ENCODE measurements at regions of chr19 and their contacts with region 1.

Region 1: DNA sequence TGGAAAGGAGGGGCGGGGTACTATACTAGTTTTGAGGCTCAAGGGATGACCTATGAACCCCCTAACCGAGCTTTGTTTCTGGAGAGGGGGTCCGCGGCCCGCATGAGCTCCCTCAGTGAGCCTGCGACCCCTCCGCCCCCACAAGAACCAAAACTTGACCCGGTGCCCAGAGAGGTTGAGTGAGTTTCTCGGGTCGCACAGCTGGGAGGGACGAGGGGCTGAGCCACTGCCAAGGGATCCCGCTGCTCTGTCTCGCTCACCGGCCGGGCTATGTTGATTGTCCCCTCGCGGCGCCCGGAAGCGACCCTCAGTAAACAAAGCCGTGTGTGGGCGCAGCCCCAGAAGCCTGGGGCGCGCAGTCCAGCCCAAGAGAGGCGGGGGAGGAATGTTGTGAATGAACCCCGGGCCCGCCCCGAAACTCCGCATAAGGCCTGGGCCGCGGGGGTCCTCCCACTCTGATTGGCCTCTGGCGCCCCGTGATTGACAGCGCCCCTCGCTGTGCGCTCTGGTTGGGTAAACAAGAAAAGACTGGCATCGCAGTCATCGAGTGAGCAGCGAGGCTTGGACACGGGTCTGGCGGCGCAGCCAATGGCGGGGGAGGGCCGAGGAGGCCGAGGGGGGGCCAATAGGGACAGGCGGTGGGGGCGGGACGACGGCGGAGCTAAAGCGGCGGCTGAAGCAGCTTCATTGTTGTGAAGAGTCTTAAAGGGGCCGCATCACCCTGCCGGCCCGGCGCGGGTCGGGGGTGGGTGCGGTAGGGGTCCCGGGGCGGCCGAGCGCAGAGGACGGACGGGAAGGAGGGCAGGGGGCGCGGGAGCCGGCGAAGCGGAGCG is at the start of gene ZSWIM4:
- DNase-seq: peak; percentile 64 to 94 (median 79)
- ATAC-seq: peak; percentile 92 to 97 (median 96)
- H3K4me3 ChIP-seq: peak within 1 kb of the TSS; percentile 69 to 70
- H3K4me3 Mint-ChIP-seq: peak within 1 kb of the TSS; percentile 94 to 97 (median 95)
- H3K27ac ChIP-seq: peak within 1 kb of the TSS; percentile 73
- H3K27ac Mint-ChIP-seq: peak within 1 kb of the TSS; percentile 94 to 96
- H3K4me1 ChIP-seq: peaks cover 6 to 32% of the 10 kb centered on the region in 2 experiments
- H3K4me1 Mint-ChIP-seq: peaks cover 30 to 35% (median 34%) of the 10 kb centered on the region in 3 donors
- H3K27me3 ChIP-seq: no peaks in the 10 kb centered on the region
- H3K27me3 Mint-ChIP-seq: no peaks in the 10 kb centered on the region
- total RNA-seq, gene ZSWIM4: 5.4 to 9.8 (median 9.0) TPM

Region 2: DNA sequence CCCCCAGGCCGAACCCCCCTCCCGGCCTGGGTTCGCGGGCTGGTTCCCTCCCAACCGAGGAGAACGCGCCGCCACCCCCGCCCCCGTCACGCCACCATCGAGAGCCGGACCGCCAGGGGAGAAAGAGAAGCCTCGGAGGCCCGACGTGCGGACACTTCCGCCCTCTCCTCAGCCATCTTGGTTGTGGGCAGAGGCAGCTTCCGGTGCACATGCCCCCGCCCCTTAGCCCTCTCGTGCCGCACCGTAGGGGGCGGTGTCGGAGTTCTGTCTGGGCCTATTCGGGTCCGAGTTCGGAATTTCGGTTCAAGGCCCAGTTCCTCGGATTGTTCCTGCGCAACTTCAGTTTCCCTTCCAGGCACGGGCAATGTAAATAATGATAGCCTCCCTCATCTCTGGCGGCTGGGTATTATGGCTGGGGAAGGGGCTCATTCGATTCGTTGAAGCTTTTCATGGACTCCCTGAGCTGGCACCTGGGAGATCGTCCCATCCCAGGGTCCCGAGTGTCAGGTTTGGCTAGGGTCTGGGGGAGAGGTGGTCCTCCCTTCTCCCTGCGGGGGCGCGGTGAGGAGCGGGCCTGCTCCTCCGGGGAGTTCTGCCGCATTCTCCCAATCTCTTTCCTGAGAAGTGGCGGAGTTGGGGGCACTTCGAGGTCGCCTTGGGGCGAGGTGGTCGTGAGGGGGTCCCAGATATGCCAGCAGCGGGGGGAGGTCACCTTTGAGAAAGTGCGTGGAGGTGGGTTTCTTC is 644.6 kb before region 1 on chr19 and contains the starts of genes IER2 and STX10:
- CTCF ChIA-PET with region 1: no interaction called
- POLR2A ChIA-PET with region 1: interaction called in 1 of 2 experiments, 12 read pairs
- DNase-seq: peak; percentile 81 to 95 (median 92)
- ATAC-seq: peak; percentile 58 to 62 (median 60)
- H3K4me3 ChIP-seq: peak within 1 kb of the TSS; percentile 70 to 99
- H3K4me3 Mint-ChIP-seq: peak within 1 kb of the TSS; percentile 98 to 99 (median 99)
- H3K27ac ChIP-seq: peak within 1 kb of the TSS; percentile 73
- H3K27ac Mint-ChIP-seq: peak within 1 kb of the TSS; percentile 94 to 95
- H3K4me1 ChIP-seq: peaks cover 3 to 45% of the 10 kb centered on the region in 2 experiments
- H3K4me1 Mint-ChIP-seq: peaks cover 18 to 38% (median 30%) of the 10 kb centered on the region in 3 donors
- H3K27me3 ChIP-seq: no peaks in the 10 kb centered on the region
- H3K27me3 Mint-ChIP-seq: peaks cover 0 to 2% of the 10 kb centered on the region in 2 donors
- total RNA-seq, gene IER2: 165 to 413 (median 196) TPM
- total RNA-seq, gene STX10: 43.8 to 89.6 (median 67.3) TPM